ENCODE measurements at regions of chr3 and their contacts with region 1.

Region 1: GRCh38 chr3:150227839-150228238 is 180.3 kb upstream of the TSC22D2 start:
- DNase-seq: peak; percentile 91
- ATAC-seq: peak; percentile 94
- H3K4me3 Mint-ChIP-seq: no peak overlapping the region
- H3K27ac Mint-ChIP-seq: no peak overlapping the region
- H3K4me1 Mint-ChIP-seq: peaks cover 23% of the 10 kb centered on the region
- H3K27me3 Mint-ChIP-seq: no peaks in the 10 kb centered on the region; the same call in 1 of the 2 replicates
- CTCF ChIP-seq: peak; percentile 78

Region 2: DNA sequence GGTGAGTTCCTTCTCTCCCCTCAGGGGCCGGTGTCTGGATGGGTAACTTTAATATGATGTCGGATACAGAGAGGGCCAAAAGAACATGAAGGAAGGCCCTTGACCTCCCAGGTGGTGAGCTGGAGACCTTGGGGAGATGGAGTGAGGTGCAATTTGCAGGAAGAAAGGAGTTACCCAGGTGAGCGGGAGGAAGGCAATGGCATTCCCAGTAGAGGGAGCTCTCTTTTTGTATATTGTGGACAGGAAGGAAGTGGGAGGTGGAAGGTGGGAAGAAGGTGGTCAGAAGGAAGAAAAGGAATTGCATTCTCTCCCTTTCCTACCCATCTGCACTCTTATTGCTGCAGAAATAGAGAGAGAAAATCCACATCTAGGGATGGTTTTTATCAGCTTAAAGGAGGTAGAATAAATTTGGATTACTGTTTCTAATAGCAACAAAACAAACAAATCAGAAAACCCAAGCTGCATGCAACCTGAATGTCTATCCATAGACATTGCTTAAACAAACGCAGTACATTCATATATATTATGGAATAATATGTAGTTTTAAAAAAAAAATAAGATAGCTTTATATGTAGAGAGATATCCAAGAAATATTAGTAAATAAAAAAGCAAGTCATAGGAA is 11.3 kb after region 1 on chr3:
- CTCF ChIA-PET with region 1: interaction called, 34 read pairs
- POLR2A ChIA-PET with region 1: no interaction called
- DNase-seq: peak; percentile 44
- ATAC-seq: peak; percentile 92
- H3K4me3 Mint-ChIP-seq: no peak overlapping the region
- H3K27ac Mint-ChIP-seq: peak overlapping the region; percentile 79; the same call in 1 of the 2 replicates
- H3K4me1 Mint-ChIP-seq: peaks cover 28% of the 10 kb centered on the region
- H3K27me3 Mint-ChIP-seq: no peaks in the 10 kb centered on the region
- CTCF ChIP-seq: 0 out of 2 replicates have a peak, but pooled peaks have one; percentile 18

Region 3: DNA sequence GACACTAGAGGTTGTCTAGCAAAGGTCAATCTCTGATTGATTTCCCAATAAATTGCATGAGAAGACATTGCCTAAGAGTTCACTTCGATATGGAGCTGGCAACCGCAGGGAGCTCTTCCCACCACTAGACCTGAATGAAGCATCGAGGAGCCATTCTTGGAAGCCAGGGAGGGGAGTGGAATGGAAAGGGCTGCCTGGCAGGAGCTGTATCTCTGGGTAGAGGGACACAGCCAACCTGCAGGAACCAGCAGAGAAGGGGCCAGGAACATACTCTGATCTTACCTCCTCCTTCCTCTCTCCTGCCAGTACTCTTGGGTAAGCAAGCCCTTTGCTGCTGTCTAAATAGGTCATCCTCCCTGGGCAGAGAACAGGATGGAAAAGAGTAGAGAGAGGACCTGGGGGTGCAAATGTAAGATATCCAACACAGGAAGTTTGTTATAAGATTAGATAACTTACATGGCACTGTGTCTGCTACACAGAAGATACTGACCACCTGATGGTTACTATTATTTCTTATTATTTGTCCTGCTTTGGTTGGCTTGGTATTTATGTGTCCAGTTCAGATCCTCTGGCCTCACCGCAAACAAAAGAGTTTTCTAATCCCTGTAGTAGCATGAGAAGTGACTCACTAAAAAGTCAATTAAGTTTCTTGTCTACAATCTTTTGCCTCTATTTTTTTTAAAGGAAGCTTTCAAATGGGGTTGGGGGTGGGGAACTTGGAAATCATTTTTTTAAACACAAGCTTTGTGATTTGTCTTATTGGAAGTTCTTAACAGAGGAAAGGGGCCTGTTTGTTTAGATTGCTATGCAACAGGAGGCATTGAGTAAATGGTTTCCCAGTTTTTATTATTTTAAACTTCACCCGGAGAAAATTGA is 23.6 kb after region 1 on chr3:
- CTCF ChIA-PET with region 1: interaction called, 12 read pairs
- POLR2A ChIA-PET with region 1: no interaction called
- DNase-seq: no peak
- ATAC-seq: peak; percentile 75
- H3K4me3 Mint-ChIP-seq: no peak overlapping the region
- H3K27ac Mint-ChIP-seq: no peak overlapping the region
- H3K4me1 Mint-ChIP-seq: peaks cover 31% of the 10 kb centered on the region
- H3K27me3 Mint-ChIP-seq: no peaks in the 10 kb centered on the region
- CTCF ChIP-seq: no peak

Region 4: DNA sequence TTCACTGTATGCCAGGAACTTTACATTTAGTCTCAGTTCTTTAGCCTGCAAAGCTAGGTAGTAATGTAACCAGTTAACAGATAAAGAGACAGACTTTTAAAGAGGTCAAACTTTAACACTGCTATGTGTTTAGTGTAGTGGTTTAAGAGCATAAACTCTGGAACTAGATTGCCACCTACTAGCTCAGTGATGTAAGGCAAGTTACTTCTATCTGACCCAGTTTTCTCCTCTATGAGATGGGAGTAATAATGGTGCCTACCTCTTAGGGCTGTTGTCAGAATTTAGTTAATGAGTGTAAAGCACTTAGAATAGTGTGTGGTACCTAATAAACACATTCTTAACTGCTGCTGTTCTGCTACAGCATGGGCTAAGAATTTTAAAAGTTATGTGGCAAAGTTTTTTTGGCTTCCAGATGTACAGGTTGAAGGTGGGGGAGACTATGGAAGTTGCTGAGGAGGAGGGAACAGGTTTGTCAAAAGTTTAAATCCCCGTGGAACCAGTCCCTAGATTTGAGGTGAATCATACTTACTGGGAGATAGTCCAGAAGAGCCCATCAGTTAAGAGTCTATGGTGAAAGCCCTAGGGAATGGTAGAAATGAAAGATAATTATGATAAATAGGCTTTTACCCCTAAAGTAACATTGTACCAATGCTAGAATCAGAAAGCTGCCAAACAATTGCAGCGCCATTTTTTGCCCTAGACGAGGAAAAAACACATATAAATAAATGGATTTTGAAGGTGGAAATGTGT is 194.1 kb after region 1 on chr3:
- CTCF ChIA-PET with region 1: no interaction called
- POLR2A ChIA-PET with region 1: no interaction called
- DNase-seq: no peak
- ATAC-seq: no peak
- H3K4me3 Mint-ChIP-seq: no peak overlapping the region
- H3K27ac Mint-ChIP-seq: no peak overlapping the region
- H3K4me1 Mint-ChIP-seq: peaks cover 19% of the 10 kb centered on the region
- H3K27me3 Mint-ChIP-seq: no peaks in the 10 kb centered on the region
- CTCF ChIP-seq: no peak

Region 5: GRCh38 chr3:150528354-150528797 is 300.5 kb after region 1 on chr3:
- CTCF ChIA-PET with region 1: interaction called, 14 read pairs
- POLR2A ChIA-PET with region 1: no interaction called
- DNase-seq: no peak
- ATAC-seq: no peak
- H3K4me3 Mint-ChIP-seq: peak overlapping the region; percentile 40; the same call in 1 of the 2 replicates
- H3K27ac Mint-ChIP-seq: no peak overlapping the region
- H3K4me1 Mint-ChIP-seq: peaks cover 23% of the 10 kb centered on the region
- H3K27me3 Mint-ChIP-seq: no peaks in the 10 kb centered on the region
- CTCF ChIP-seq: no peak